ENCODE measurements at regions of chr10 and their contacts with region 1.

Region 1: DNA sequence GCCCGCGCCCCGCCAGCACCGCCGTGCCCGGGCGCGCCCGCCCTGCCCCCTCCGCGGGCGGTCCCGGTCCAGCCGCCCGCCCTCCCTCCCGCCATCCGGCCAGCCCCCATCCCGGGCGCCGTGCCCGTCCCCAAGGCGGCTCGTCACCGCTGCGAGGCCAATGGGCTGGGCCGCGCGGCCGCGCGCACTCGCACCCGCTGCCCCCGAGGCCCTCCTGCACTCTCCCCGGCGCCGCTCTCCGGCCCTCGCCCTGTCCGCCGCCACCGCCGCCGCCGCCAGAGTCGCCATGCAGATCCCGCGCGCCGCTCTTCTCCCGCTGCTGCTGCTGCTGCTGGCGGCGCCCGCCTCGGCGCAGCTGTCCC is at the start of gene HTRA1:
- DNase-seq: peak; percentile 76 to 89 (median 81)
- H3K4me3 ChIP-seq: peak within 1 kb of the TSS in 3 of 4 donors; percentile 16 to 89 (median 83)
- H3K27ac ChIP-seq: peak within 1 kb of the TSS in 3 of 5 donors; percentile 22 to 87 (median 74)
- H3K4me1 ChIP-seq: peaks cover 8 to 23% of the 10 kb centered on the region in 2 donors
- H3K27me3 ChIP-seq: no peaks in the 10 kb centered on the region
- CTCF ChIP-seq: no peak
- POLR2A ChIP-seq: peak in 1 of 2 donors; percentile 61
- total RNA-seq, gene HTRA1: 8.5 to 167 (median 82.4) TPM

Region 2: DNA sequence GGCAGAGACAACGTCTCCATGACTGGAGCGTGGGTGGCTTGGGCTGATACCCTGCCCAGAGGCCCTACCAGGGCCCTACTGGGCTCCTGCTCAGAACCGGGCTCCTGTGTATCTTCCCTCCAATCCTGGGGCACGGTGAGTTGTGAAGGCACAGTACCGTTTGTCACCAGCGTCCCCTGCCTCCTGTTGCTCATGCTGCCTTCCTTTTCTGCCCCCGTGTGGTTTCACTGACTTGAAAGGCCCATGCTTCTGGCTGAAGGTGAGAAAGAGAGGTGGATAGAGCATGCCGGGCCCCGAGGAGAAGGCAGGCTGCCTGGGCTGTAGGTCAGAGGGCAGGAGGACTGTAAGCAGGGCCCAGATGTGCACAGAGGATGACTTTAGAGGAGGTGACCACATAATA is 90.1 kb after region 1 on chr10:
- intact Hi-C with region 1: loop called in 1 of 2 experiments (anchors 10 kb)
- DNase-seq: no peak
- H3K4me3 ChIP-seq: no peak overlapping the region
- H3K27ac ChIP-seq: no peak overlapping the region
- H3K4me1 ChIP-seq: no peaks in the 10 kb centered on the region
- H3K27me3 ChIP-seq: no peaks in the 10 kb centered on the region
- CTCF ChIP-seq: no peak
- POLR2A ChIP-seq: no peak

Measured in adrenal gland (tissue), 19 donors.